ENCODE measurements at regions of chr9 and their contacts with region 1.

Region 1: GRCh38 chr9:128927731-128928411 is 7.1 kb downstream of the PHYHD1 start:
- DNase-seq: peak; percentile 61 to 73 (median 70)
- ATAC-seq: peak; percentile 84
- H3K4me3 ChIP-seq: no peak overlapping the region
- H3K27ac ChIP-seq: peak overlapping the region in 2 of 4 donors; percentile 37 to 44
- H3K4me1 ChIP-seq: peaks cover 17% of the 10 kb centered on the region
- H3K27me3 ChIP-seq: no peaks in the 10 kb centered on the region
- CTCF ChIP-seq: peak; percentile 70 to 92 (median 88)
- POLR2A ChIP-seq: no peak

Region 2: DNA sequence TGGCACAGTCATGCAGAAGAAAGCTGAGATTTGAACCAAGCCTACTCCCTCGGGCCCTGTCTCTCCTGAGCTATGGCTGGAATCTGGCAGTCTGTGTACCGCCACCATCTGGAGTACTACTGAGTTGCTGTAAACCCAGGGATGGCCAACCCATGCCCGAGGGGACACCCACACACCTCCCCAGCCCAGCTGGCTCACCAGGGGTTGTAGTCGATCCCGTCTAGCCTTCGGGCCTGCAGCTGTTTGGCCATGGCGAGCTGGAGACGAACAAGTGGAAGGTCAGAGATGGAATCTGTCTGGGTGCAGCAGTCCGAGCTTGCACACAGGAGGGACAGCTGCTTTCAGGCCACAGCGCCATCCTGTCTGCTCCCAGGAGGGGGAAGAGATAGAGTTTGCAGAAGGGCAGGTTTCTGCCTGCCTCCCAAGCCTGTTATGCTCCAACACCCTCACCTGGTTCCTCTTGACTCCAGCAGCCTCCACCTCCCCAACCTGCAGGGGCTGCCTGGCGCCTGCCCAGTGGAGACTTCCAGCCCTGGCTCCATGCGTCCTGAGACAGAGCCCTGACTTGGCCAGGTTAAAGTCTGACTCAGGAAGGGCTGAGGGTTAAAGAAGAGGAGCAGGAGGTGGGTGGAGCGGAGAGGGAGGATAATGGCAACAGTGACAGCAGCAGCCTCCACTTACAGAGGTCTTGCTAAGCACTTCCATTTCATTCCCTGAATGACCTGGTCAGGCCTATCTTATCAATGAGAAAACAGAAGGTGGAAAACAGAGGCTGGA is 82.5 kb before region 1 on chr9:
- intact Hi-C with region 1: loop called (anchors 5 kb)
- DNase-seq: no peak
- ATAC-seq: peak; percentile 35
- H3K4me3 ChIP-seq: no peak overlapping the region
- H3K27ac ChIP-seq: no peak overlapping the region
- H3K4me1 ChIP-seq: peaks cover 12% of the 10 kb centered on the region
- H3K27me3 ChIP-seq: no peaks in the 10 kb centered on the region
- CTCF ChIP-seq: no peak
- POLR2A ChIP-seq: no peak

Region 3: GRCh38 chr9:128863647-128864046 is 64.2 kb before region 1 on chr9:
- intact Hi-C with region 1: loop called (anchors 5 kb)
- DNase-seq: peak; percentile 73 to 83 (median 78)
- ATAC-seq: peak; percentile 74
- H3K4me3 ChIP-seq: no peak overlapping the region
- H3K27ac ChIP-seq: peak overlapping the region in 1 of 4 donors; percentile 65
- H3K4me1 ChIP-seq: peaks cover 23% of the 10 kb centered on the region
- H3K27me3 ChIP-seq: no peaks in the 10 kb centered on the region
- CTCF ChIP-seq: peak; percentile 82 to 96 (median 91)
- POLR2A ChIP-seq: no peak